Endothelial cell of umbilical vein (primary cell): ENCODE measurements at regions of chr19 and their contacts with region 1.

Region 1: GRCh38 chr19:6753178-6754031 is 13.8 kb downstream of the SH2D3A start:
- DNase-seq: peak; percentile 82
- H3K4me3 ChIP-seq: peak overlapping the region; percentile 30 to 56 (median 31)
- H3K27ac ChIP-seq: no peak overlapping the region
- H3K4me1 ChIP-seq: peaks cover 8% of the 10 kb centered on the region
- H3K27me3 ChIP-seq: no peaks in the 10 kb centered on the region
- CTCF ChIP-seq: peak; percentile 21 to 42
- POLR2A ChIP-seq: no peak

Region 2: GRCh38 chr19:6632002-6632621 is 121.3 kb before region 1 on chr19:
- CTCF ChIA-PET with region 1: no interaction called
- POLR2A ChIA-PET with region 1: no interaction called
- dilution Hi-C with region 1: no loop called
- intact Hi-C with region 1: loop called (anchors 1 kb)
- DNase-seq: peak; percentile 85
- H3K4me3 ChIP-seq: no peak overlapping the region
- H3K27ac ChIP-seq: no peak overlapping the region
- H3K4me1 ChIP-seq: no peaks in the 10 kb centered on the region
- H3K27me3 ChIP-seq: no peaks in the 10 kb centered on the region
- CTCF ChIP-seq: peak; percentile 72 to 79
- POLR2A ChIP-seq: no peak

Region 3: GRCh38 chr19:7004313-7004931 is 251.0 kb after region 1 on chr19:
- CTCF ChIA-PET with region 1: no interaction called
- POLR2A ChIA-PET with region 1: no interaction called
- dilution Hi-C with region 1: no loop called
- intact Hi-C with region 1: no loop called
- DNase-seq: peak; percentile 36
- H3K4me3 ChIP-seq: no peak overlapping the region
- H3K27ac ChIP-seq: no peak overlapping the region
- H3K4me1 ChIP-seq: no peaks in the 10 kb centered on the region
- H3K27me3 ChIP-seq: no peaks in the 10 kb centered on the region
- CTCF ChIP-seq: peak; percentile 49 to 61
- POLR2A ChIP-seq: no peak